Mammary epithelial cell (primary cell): ENCODE measurements at regions of chr3 and their contacts with region 1.

Region 1: DNA sequence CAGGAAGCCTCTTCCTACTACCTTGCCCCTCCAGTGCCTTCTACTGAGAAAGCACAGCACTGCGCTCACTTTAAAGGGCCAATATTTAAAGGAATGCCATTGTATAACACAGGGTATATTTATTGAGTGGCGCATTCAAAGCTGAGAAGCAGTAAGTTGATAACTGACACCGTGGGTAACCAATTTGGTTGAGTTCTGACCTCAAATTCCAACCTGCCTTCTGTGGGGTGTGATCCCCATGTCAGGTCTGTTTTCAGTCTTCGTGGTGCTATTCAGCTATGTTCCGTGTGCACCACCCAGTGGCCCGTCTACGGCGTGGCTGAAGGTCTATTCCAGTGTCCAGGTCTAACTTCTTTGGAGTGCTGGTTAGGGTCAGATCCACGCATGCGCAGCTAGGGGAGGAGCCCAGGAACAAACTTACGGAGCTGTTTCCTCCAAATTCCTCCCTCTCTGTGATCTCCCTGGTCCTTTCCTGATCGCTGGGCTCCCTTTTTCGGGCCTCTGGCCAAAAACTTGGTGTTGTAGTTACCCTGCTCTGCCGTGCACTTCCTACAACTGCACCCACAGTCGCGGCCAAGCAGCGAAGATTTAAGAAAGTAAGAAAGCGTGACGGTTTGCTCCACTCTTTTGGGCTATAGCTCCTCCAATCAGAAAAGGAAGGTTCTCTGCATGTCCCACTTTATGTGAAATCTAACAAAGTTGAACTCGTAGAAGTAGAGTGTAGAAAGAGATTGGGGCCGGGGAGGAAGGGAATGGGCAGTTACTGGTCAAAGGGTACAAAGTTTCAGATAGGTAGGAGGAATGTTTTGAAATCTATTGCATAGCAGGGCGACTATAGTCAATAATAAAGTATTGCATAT is 7.7 kb downstream of the LRRC2 start:
- DNase-seq: peak; percentile 92
- H3K4me3 ChIP-seq: no peak overlapping the region
- H3K27ac ChIP-seq: no peak overlapping the region
- H3K4me1 ChIP-seq: peaks cover 10% of the 10 kb centered on the region
- H3K27me3 ChIP-seq: no peaks in the 10 kb centered on the region
- CTCF ChIP-seq: peak; percentile 52 to 62

Region 2: DNA sequence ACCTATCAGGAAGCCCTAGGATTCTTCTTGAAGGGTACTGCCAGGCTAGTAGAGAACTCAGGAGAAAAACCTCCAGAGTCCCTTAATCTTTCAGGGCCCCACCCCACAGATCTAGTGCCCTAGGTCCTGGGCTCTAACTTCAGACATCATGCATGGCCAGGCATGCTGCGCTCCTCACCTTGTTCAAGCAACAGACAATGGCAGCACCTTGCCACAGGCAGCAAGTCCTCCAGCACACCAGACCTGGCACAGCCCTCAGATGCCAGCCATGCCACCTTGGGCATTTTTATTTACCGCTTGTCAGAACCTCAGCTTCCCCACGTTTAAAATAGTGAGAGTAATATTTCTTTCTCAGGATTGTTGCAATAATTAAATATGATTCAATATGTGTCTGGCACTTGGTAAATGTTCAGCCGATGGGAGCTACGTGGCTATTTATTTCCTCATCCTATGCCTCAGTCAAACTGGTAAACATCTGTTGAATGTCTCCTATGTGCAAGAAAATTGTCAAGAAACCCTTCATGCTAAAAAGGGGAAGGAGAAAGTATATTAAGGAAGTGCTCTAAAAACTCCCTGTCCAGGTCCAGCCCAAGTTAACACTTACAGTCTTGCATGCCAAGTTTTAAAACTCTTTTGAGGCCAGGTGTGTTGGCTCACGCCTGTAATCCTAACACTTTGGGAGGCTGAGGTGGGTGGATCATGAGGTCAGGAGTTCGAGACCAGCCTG is 335.8 kb before region 1 on chr3:
- CTCF ChIA-PET with region 1: no interaction called
- dilution Hi-C with region 1: no loop called
- in situ Hi-C with region 1: no loop called
- intact Hi-C with region 1: loop called (anchors 5 kb)
- DNase-seq: no peak
- H3K4me3 ChIP-seq: no peak overlapping the region
- H3K27ac ChIP-seq: no peak overlapping the region
- H3K4me1 ChIP-seq: no peaks in the 10 kb centered on the region
- H3K27me3 ChIP-seq: no peaks in the 10 kb centered on the region
- CTCF ChIP-seq: no peak

Region 3: DNA sequence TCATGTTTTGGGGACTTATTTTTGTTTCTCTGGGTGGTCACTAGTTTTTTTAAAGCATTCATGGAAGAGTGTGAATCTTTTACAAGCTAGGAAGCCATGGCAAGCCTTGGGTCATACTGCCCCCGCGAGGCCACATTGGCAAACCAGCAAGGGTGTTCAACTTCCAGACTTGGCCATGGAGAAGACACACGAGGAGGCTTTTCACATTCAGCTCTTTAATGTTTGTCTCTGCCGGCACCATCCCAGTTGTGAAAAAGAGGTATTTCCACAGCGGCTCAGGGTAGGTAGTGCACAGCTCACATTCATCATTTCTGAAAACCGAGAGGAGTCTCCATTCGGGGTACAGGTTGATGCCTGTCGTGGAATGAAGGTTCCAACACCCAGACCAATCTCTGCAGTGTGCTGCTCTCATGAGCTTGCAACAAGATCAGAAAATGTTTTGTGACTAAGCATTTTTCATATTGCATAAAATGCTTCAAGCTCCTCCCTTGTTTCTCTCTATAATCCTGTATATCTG is 179.9 kb before region 1 on chr3:
- CTCF ChIA-PET with region 1: no interaction called
- dilution Hi-C with region 1: no loop called
- in situ Hi-C with region 1: no loop called
- intact Hi-C with region 1: loop called (anchors 1 kb)
- DNase-seq: peak; percentile 61
- H3K4me3 ChIP-seq: no peak overlapping the region
- H3K27ac ChIP-seq: no peak overlapping the region
- H3K4me1 ChIP-seq: peaks cover 16% of the 10 kb centered on the region
- H3K27me3 ChIP-seq: no peaks in the 10 kb centered on the region
- CTCF ChIP-seq: peak; percentile 76 to 81

Region 4: DNA sequence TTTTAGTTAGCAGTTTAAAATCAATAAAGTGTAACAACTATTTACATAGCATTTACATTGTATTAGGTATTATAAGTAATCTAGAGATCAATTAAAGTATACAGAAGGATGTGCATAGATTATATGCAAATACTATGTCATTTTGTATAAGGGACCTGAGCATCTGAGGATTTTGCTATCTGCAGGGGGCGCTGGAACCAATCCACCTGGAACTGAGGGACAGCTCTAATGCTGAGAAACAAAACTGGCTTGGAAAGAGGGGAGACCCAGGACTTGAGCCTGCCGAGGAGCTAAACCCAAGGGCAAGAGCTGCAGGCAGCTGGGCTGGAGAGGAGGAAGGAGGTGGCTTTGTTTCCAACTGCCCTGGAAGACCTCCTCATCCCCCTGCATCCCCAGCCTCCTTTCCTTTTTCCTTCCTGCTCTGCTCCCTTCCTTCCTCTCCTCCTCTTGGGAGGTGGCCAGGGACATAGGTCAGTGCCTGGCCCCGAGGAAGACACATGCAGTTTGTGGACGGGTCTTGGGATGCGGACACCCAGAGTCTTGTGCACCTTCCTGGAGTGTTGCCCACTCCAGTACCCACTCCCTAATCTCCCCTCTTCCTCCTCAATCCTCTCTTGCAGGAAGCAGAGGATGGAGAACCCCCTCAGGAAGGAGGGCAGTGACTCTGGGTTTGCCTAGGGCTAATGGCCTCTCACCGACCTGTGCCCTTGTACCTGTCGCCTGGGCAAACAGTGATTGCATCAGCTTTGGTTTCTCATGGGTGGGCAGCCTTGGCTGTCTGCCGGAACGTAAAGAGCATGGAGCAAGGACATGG is 61.5 kb before region 1 on chr3:
- CTCF ChIA-PET with region 1: interaction called, 7 read pairs
- dilution Hi-C with region 1: no loop called
- in situ Hi-C with region 1: loop called in 1 of 2 experiments (anchors 5 kb)
- intact Hi-C with region 1: loop called (anchors 2 kb)
- DNase-seq: no peak
- H3K4me3 ChIP-seq: no peak overlapping the region
- H3K27ac ChIP-seq: no peak overlapping the region
- H3K4me1 ChIP-seq: peaks cover 11% of the 10 kb centered on the region
- H3K27me3 ChIP-seq: no peaks in the 10 kb centered on the region
- CTCF ChIP-seq: peak; percentile 33 to 49

Region 5: GRCh38 chr3:46517016-46517793 is 41.2 kb before region 1 on chr3:
- CTCF ChIA-PET with region 1: no interaction called
- dilution Hi-C with region 1: no loop called
- in situ Hi-C with region 1: no loop called
- intact Hi-C with region 1: loop called (anchors 2 kb)
- DNase-seq: peak; percentile 92
- H3K4me3 ChIP-seq: no peak overlapping the region
- H3K27ac ChIP-seq: peak overlapping the region; percentile 82
- H3K4me1 ChIP-seq: peaks cover 35% of the 10 kb centered on the region
- H3K27me3 ChIP-seq: no peaks in the 10 kb centered on the region
- CTCF ChIP-seq: no peak

Region 6: DNA sequence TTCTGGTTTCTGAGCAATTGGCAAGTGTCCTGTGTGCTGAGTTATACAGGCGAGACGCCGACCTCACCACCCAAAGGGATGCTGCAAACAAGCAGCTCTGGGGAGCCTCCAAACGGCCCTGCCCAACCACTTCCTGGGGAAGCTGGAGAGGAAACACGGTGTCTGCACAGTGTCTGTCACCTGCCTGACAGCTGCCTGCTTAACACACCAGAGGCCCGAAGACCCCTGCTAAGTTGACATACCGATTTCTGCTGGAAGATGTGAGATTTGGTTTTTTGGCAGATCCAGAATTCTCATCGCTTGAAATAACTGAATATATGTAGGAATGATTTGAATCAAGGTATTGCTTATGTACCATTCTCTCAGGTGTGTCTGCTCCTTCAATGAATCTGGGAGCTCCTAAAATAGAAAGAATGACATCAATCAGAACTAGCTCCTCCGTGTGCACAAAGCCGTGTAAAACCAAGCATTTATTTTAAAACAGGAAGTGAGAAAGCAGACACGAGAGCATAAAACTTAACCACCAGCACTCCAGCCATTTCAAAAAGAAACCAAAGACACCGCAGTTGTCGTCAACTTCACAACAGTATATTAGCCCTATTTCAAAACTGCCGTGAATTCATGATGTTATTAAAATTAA is 19.5 kb before region 1 on chr3:
- CTCF ChIA-PET with region 1: no interaction called
- dilution Hi-C with region 1: no loop called
- in situ Hi-C with region 1: no loop called
- intact Hi-C with region 1: no loop called
- DNase-seq: no peak
- H3K4me3 ChIP-seq: no peak overlapping the region
- H3K27ac ChIP-seq: no peak overlapping the region
- H3K4me1 ChIP-seq: no peaks in the 10 kb centered on the region
- H3K27me3 ChIP-seq: no peaks in the 10 kb centered on the region
- CTCF ChIP-seq: no peak

Region 7: DNA sequence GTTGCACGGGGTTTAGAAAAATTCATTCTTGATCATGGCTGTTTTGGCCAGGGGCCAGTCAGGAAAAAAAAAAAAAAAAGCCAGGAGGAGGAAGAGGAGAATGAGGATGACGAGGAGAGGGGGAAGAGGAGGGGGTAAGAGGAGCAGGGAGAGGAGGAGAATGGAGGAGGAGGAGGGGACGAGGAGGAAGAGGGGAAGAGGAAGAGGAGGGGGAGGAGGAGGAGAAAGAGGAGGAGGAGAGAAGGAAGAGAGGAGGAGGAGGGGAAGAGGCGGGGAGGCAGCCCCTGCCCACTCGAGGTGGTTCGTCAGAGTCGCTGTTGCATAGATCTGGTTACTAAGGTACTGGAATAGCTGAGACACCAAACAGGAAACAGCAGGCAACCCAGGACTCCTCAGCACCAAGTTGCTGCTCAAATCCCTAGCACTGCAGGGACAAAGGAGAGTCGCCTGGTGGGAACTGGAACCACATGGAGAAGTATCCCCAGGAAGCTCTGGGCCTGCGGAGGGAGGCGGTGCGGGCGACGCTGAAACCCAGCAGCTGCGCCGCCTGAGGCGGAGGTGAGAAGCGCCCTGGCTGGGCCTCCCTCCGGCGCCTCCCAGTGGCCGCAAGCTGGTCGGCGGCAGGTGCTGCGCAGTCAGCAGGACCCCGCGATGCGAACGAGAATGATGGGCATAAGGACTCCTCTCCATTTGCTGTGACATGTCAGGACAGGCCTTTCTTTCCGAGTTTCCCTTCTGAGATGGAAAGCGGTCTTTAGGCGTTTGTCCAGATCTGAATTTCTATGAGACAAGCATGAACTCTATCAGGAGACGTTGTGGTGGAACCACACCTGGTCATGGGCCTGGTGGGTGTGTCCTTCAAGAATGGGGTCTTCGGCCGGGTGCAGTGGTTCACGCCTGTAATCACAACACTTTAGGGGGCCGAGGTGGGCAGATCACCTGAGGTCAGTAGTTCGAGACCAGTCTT is 71.4 kb after region 1 on chr3:
- CTCF ChIA-PET with region 1: no interaction called
- dilution Hi-C with region 1: no loop called
- in situ Hi-C with region 1: no loop called
- intact Hi-C with region 1: loop called (anchors 2 kb)
- DNase-seq: peak; percentile 71
- H3K4me3 ChIP-seq: peak overlapping the region in 1 of 3 experiments; percentile 13
- H3K27ac ChIP-seq: no peak overlapping the region
- H3K4me1 ChIP-seq: peaks cover 9% of the 10 kb centered on the region
- H3K27me3 ChIP-seq: no peaks in the 10 kb centered on the region
- CTCF ChIP-seq: peak; percentile 88 to 99

Region 8: DNA sequence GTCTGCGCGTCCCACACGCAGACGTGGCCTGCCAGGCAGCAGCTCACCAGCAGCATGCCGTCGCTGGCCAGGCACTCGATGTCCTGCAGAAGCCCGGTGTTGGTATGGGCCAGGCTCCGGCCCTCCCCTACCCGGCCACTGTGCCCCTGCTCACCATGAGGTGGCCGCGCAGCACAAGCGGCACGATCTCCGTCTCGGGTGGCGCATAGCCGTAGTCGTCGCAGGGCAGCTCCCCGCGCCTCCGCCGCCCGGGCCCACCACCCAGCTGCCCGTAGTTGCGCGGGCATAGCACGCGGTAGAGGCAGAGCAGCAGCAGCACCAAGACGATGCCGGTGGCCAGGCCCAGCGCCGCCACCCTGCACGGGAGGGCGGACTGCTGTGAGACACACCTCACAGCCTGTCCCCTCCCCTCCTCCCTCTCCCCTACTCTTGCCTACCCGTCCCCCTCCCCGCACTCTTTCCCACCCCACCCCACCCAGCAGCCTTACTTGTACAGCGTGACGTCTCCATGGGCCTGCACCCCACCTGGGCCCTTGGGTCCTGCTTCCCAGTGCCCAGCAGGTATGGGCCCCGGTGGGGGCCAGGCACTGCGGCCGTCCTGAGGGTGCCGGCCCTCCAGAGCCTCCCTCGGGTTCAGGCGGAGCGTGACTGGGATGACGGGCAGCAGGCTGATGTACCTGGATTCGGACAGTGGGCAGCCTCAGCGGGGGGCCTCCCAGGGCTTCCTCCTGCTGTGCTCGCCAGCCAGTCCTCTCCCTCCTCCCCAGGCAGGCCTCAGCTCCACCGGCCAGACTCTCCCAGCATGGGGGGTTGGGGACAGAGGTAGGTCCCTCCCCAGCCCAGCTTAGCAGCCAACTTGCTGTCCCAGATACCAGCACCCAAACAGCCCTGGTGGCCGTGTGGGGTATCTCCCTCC is 860.0 kb after region 1 on chr3:
- CTCF ChIA-PET with region 1: no interaction called
- dilution Hi-C with region 1: no loop called
- in situ Hi-C with region 1: no loop called
- intact Hi-C with region 1: no loop called
- DNase-seq: no peak
- H3K4me3 ChIP-seq: no peak overlapping the region
- H3K27ac ChIP-seq: no peak overlapping the region
- H3K4me1 ChIP-seq: no peaks in the 10 kb centered on the region
- H3K27me3 ChIP-seq: no peaks in the 10 kb centered on the region
- CTCF ChIP-seq: peak; percentile 12 to 15